ENCODE measurements at regions of chr3 and their contacts with region 1.

Region 1: DNA sequence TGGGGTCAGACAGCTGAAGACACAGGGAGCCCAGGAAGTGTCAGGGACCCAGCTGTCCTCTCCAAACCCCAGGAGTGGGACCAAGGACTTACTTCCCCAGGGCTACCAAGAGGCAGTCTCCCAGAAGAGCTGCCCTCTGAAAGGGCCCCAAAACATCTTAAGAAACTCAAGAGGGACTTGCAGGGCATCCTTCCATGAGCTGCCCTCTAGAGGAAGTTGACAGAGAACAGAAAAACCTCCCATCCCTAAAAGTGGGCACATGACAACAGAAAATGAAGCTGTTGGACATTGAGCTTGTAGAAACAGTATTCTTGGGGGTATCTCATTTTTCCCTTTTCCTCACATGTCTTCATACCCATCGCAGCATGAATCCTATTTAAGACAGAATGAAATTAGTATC is 58.9 kb downstream of the MECOM start:
- DNase-seq: no peak
- ATAC-seq: peak; percentile 86
- H3K4me3 Mint-ChIP-seq: peak overlapping the region; percentile 48
- H3K27ac Mint-ChIP-seq: no peak overlapping the region
- H3K4me1 Mint-ChIP-seq: peaks cover 17% of the 10 kb centered on the region
- H3K27me3 Mint-ChIP-seq: no peaks in the 10 kb centered on the region
- CTCF ChIP-seq: no peak

Region 2: DNA sequence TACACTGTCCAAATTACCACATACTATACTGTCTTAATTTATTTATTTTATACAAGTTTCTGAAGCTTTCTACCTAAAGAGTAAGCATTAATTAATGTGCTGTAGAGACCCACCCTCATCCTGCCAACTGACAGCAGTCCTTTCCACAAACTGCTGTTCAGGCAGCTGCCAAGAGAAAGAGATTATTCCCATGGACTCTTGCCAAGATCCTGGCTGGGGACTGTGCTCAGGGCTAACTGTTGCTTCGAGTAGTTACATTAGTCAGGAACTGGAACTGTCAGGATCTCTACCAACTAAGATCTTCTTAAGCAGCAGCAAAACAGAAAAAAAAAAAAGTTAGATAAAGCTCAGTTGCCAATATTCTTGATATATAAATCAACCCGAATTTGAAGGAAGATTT is 339.9 kb before region 1 on chr3:
- CTCF ChIA-PET with region 1: no interaction called
- POLR2A ChIA-PET with region 1: no interaction called
- DNase-seq: no peak
- ATAC-seq: no peak
- H3K4me3 Mint-ChIP-seq: no peak overlapping the region
- H3K27ac Mint-ChIP-seq: no peak overlapping the region
- H3K4me1 Mint-ChIP-seq: peaks cover 26% of the 10 kb centered on the region
- H3K27me3 Mint-ChIP-seq: no peaks in the 10 kb centered on the region
- CTCF ChIP-seq: no peak

Region 3: GRCh38 chr3:169505577-169506230 is 98.9 kb before region 1 on chr3:
- CTCF ChIA-PET with region 1: interaction called, 10 read pairs
- POLR2A ChIA-PET with region 1: no interaction called
- DNase-seq: peak; percentile 36
- ATAC-seq: peak; percentile 70
- H3K4me3 Mint-ChIP-seq: no peak overlapping the region
- H3K27ac Mint-ChIP-seq: no peak overlapping the region
- H3K4me1 Mint-ChIP-seq: peaks cover 24% of the 10 kb centered on the region
- H3K27me3 Mint-ChIP-seq: no peaks in the 10 kb centered on the region
- CTCF ChIP-seq: no peak; the same call in 1 of the 2 replicates

Region 4: GRCh38 chr3:169594402-169594801 is 10.2 kb before region 1 on chr3:
- CTCF ChIA-PET with region 1: interaction called, 10 read pairs
- POLR2A ChIA-PET with region 1: no interaction called
- DNase-seq: no peak
- ATAC-seq: peak; percentile 80
- H3K4me3 Mint-ChIP-seq: no peak overlapping the region
- H3K27ac Mint-ChIP-seq: peak overlapping the region; percentile 35
- H3K4me1 Mint-ChIP-seq: peaks cover 28% of the 10 kb centered on the region
- H3K27me3 Mint-ChIP-seq: no peaks in the 10 kb centered on the region
- CTCF ChIP-seq: no peak

Region 5: GRCh38 chr3:169619793-169620192 is 15.2 kb after region 1 on chr3:
- CTCF ChIA-PET with region 1: interaction called, 11 read pairs
- POLR2A ChIA-PET with region 1: interaction called, 3 read pairs
- DNase-seq: no peak
- ATAC-seq: peak; percentile 65
- H3K4me3 Mint-ChIP-seq: no peak overlapping the region
- H3K27ac Mint-ChIP-seq: peak overlapping the region; percentile 81
- H3K4me1 Mint-ChIP-seq: peaks cover 44% of the 10 kb centered on the region
- H3K27me3 Mint-ChIP-seq: no peaks in the 10 kb centered on the region
- CTCF ChIP-seq: no peak

Region 6: DNA sequence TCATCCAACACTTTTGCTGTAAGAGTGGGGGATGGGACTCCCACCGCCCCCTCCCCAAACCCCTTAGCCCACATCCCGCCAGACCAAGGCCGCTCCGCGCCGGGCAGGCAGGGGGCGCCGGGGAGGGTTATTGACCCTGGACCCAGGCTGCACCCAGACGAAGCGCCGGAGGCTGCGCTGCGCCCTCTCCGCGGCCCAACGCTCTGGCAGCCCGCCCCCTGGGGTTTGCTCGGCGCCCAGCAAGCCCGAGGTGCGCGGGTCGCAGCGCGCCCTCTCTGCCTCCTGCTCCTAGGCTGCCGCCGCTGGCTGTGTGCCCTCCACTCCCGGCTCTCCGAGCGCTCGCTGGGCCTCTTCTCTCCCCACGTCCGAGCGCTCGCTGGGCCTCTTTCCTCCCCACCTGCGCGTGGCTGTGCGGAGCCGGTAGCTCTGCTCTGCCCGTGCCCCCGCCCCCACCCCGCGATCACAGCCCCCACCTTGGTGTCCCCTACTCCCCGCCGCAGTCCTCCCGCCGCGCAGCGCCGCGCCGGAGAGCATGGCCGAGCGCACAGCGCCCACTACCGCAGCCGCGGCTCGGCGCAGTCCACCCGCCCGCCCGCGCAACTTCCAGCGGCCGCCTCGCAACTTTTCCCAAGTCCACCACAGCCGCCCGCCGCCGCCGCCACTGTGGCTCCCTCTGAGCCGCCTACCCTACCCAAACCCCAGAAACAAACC is 57.7 kb after region 1 on chr3:
- CTCF ChIA-PET with region 1: interaction called, 25 read pairs
- POLR2A ChIA-PET with region 1: no interaction called
- DNase-seq: peak; percentile 90
- ATAC-seq: peak; percentile 53
- H3K4me3 Mint-ChIP-seq: peak overlapping the region; percentile 86
- H3K27ac Mint-ChIP-seq: peak overlapping the region; percentile 44; the same call in 1 of the 2 replicates
- H3K4me1 Mint-ChIP-seq: peaks cover 70% of the 10 kb centered on the region
- H3K27me3 Mint-ChIP-seq: peaks cover 87% of the 10 kb centered on the region
- CTCF ChIP-seq: peak; percentile 58

Region 7: GRCh38 chr3:169668957-169669681 is 64.6 kb after region 1 on chr3:
- CTCF ChIA-PET with region 1: interaction called, 25 read pairs
- POLR2A ChIA-PET with region 1: no interaction called
- DNase-seq: peak; percentile 86
- ATAC-seq: peak; percentile 83
- H3K4me3 Mint-ChIP-seq: peak overlapping the region; percentile 82
- H3K27ac Mint-ChIP-seq: peak overlapping the region; percentile 54; the same call in 1 of the 2 replicates
- H3K4me1 Mint-ChIP-seq: peaks cover 63% of the 10 kb centered on the region
- H3K27me3 Mint-ChIP-seq: peaks cover 62% of the 10 kb centered on the region
- CTCF ChIP-seq: peak; percentile 41; the same call in 1 of the 2 replicates

Measured in WTC11 (cell line).